ENCODE measurements at regions of chr6 and their contacts with region 1.

Region 1: DNA sequence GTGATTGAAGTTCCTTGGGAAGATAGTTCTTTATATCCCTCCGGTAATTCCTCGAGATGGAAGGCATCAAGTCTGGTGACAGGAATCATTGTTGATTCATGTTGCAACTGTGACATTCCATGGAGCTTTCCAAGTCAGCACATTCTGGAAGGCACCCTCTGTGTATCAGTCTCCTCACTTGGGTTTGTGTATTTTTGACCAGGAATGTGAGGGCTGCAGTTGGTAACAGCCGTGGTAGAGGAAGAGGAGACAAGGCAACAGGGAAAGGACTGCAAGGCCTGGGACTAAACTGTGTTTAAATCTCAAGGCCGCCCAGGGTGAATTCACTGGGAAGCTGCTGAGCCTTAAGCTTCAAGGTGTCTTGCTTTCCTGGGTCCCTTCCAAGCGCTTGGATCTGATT is 99.0 kb downstream of the CLIC5 start:
- DNase-seq: peak in 1 of 2 donors; percentile 58
- H3K4me3 ChIP-seq: no peak overlapping the region
- H3K27ac ChIP-seq: no peak overlapping the region
- H3K4me1 ChIP-seq: no peaks in the 10 kb centered on the region
- H3K27me3 ChIP-seq: no peaks in the 10 kb centered on the region
- CTCF ChIP-seq: no peak
- POLR2A ChIP-seq: no peak

Region 2: DNA sequence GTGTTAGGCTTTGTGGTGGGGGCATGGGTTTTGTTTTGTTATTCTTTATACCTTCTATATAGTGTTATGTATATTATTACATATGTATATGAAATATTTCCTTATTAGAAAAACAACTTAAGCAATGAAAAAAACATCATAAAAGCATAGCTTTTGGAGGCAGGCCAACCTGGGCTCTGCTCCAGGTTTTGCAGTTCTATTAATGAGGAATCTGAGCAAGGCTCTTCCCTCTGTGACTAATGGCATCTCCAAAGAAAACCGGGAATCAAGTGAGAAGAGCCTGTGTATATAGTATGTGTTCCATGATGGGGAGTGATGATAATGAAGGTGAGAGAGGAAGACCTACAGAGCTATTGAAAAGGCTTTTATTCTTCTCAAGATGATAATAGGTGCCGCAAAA is 192.2 kb before region 1 on chr6:
- intact Hi-C with region 1: loop called (anchors 10 kb)
- DNase-seq: no peak
- H3K4me3 ChIP-seq: no peak overlapping the region
- H3K27ac ChIP-seq: no peak overlapping the region
- H3K4me1 ChIP-seq: no peaks in the 10 kb centered on the region
- H3K27me3 ChIP-seq: no peaks in the 10 kb centered on the region
- CTCF ChIP-seq: no peak
- POLR2A ChIP-seq: no peak

Region 3: DNA sequence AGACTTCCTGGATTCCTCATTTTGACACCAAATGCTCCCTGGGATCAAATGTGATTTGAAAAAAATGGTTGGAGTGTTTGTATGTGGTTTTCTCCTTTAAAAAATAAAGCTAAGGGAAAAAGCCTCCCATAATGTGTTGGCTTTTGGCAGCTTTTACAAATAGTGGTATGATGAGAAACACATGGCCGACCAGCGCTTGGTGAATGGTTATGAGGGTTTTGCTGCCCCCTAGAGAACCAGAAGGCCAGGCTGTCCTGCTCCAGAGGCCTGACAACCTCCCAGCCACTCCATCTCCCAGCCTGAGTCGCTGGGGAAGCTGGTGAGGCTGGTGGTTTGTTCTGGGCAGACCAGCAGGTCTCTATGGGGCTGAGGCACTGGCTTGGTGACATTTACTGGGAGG is 29.7 kb after region 1 on chr6:
- intact Hi-C with region 1: no loop called
- DNase-seq: no peak
- H3K4me3 ChIP-seq: no peak overlapping the region
- H3K27ac ChIP-seq: no peak overlapping the region
- H3K4me1 ChIP-seq: peaks cover 17% of the 10 kb centered on the region
- H3K27me3 ChIP-seq: no peaks in the 10 kb centered on the region
- CTCF ChIP-seq: peak in 1 of 3 experiments; percentile 19
- POLR2A ChIP-seq: no peak

Measured in vagina (tissue), 2 donors.